ENCODE measurements at regions of chr3 and their contacts with region 1.

Region 1: DNA sequence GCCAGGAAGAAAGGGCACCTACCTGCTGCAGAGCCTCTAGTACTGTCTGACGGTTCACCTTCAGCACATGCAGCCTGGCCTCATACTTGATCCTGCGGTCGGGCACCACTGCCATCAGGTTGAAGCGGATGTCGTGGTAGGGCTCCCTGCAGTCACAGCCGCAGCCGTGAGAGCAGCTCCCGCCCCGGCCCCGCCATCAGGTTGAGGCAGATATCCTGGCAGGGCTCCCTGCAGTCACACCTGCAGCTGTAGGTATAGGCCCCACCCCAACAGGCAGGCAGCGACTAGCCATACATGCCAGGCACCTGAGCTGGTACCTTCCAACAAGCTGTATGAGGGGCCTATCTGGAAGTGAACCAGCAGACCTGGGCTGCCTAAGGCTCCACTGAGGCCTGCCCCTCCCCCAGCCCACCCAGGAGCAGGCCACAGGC is 38.7 kb downstream of the SEMA3G start:
- DNase-seq: no peak
- ATAC-seq: no peak
- H3K4me3 ChIP-seq: no peak overlapping the region
- H3K4me3 Mint-ChIP-seq: no peak overlapping the region
- H3K27ac ChIP-seq: no peak overlapping the region
- H3K27ac Mint-ChIP-seq: no peak overlapping the region
- H3K4me1 ChIP-seq: peaks cover 12 to 41% of the 10 kb centered on the region in 2 experiments
- H3K4me1 Mint-ChIP-seq: peaks cover 22 to 25% (median 24%) of the 10 kb centered on the region in 3 donors
- H3K27me3 ChIP-seq: no peaks in the 10 kb centered on the region
- H3K27me3 Mint-ChIP-seq: no peaks in the 10 kb centered on the region

Region 2: DNA sequence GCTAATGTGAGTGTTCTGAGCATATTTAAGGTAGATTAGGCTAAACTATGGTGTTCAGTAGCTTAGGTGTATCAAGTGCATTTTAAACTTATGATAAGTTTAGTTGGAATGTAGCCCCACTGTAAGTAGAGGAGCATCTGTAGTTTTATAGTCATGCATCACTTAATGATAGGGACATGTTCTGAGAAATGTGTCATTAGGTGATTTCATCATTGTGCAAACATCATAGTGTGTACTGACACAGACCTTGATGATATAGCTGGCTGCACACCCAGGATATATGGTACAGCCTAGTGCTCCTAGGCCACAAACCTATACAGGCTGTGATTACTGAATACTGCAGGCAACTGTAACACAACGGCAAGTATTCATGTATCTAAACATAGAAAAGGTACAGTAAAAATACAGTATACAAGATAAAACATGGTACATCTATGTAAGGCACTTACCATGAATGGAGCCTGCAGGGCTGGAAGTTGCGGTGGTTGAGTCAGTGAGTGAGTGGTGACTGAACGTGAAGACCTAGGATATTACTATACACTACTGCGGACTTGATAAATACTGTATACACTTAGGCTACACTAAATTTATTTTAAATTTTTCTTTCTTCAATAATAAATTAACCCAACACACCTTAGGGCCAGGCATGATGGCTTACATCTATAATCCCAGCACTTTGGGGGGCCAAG is 72.2 kb before region 1 on chr3:
- CTCF ChIA-PET with region 1: no interaction called
- POLR2A ChIA-PET with region 1: interaction called in 1 of 2 experiments, 12 read pairs
- DNase-seq: no peak
- ATAC-seq: no peak
- H3K4me3 ChIP-seq: no peak overlapping the region
- H3K4me3 Mint-ChIP-seq: no peak overlapping the region
- H3K27ac ChIP-seq: no peak overlapping the region
- H3K27ac Mint-ChIP-seq: no peak overlapping the region
- H3K4me1 ChIP-seq: no peaks in the 10 kb centered on the region
- H3K4me1 Mint-ChIP-seq: no peaks in the 10 kb centered on the region
- H3K27me3 ChIP-seq: no peaks in the 10 kb centered on the region
- H3K27me3 Mint-ChIP-seq: no peaks in the 10 kb centered on the region